Posterior cingulate gyrus (tissue), 11 donors: ENCODE measurements at regions of chr2 and their contacts with region 1.

Region 1: DNA sequence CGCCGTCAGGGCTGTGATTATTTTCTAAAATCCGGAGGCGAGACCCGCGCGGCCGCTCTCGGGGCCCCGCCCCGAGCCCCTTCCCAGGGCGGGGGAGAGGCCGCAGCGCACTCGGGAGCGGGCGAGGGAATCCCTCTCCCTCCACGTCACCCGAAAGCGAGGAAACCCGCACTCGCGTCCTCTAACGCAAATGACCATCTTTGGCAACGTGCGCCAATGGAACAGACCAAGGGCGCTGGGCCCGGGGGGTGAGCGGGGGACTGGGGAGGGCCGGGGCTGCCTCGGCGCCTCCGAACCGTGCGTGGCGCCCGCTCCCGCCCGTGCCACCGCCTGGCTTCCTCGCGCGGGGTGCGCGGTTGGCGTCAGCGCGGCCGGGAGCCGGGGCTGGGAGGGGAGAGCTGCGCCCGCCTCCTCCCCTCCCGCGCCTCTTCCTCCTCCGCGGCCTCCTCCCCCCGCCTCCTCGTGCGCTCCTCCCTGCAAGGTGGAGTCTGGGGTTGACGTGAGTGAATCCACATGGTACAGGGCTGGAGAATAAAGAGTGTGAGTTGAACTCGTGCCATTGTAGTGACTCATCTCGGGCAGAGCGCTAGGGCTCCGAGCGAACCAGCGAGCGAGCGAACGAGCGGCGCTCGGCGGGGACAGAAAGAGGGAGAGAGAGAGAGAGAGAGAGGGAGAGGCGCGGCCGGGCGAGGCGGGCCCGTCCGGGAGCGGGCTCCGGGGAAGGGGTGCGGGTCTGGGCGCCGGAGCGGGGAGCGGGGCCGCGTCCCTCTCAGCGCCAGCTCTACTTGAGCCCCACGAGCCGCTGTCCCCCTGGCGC is at the start of gene FOSL2:
- DNase-seq: peak; percentile 77 to 98 (median 86)

Region 2: GRCh38 chr2:27703638-27704341 is 688.7 kb before region 1 on chr2:
- intact Hi-C with region 1: loop called (anchors 2 kb)
- DNase-seq: peak; percentile 59 to 97 (median 86)

Region 3: DNA sequence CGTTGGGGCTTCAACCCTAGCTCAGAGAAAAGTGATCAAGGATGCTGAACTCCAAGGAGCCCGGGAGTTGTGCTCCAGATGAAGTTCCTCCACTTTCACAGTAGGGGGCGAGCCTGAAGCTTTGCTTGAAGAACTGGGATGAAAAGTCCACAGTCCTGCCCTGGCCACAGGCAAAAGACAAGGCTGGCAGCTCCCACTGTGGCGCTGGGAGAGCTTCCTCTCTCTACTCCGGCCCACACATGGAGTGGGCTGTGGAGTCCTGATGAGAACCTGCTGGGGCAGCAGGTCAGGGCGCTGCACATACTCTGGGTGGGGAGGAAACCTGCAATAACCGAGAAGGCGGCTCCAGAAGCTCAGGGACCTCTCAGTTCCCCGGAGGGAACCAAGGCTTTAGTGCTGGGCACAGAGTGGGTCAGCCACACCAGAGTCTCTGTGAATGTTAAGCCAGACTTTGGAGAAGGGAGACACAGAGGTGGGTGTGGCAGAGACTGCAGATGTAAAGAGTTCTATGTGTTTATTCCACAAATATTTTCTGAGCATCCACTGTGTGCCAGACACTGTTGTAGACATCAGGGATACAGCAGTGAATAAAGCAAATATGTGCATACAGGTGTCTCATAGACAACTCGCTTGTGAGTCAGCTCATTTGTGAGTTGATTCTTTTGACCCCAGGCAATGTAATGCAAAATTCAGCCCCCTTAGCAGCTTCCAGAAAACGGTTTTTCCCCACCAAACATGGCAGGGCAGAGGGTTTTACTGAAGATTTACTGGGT is 668.9 kb before region 1 on chr2:
- intact Hi-C with region 1: loop called (anchors 1 kb)
- DNase-seq: peak; percentile 37 to 94 (median 68)

Region 4: GRCh38 chr2:27890146-27890923 is 502.2 kb before region 1 on chr2 and contains the starts of genes BABAM2 and RBKS:
- intact Hi-C with region 1: loop called (anchors 2 kb)
- DNase-seq: peak; percentile 68 to 97 (median 80)

Region 5: GRCh38 chr2:27954771-27955383 is 437.6 kb before region 1 on chr2:
- intact Hi-C with region 1: loop called (anchors 10 kb)
- DNase-seq: peak in 1 of 10 donors; percentile 34

Region 6: GRCh38 chr2:28233164-28233676 is 159.3 kb before region 1 on chr2:
- intact Hi-C with region 1: loop called (anchors 10 kb)
- DNase-seq: no peak

Region 7: GRCh38 chr2:28507806-28508764 is 115.6 kb after region 1 on chr2:
- intact Hi-C with region 1: no loop called
- DNase-seq: no peak